ENCODE measurements at regions of chr6 and their contacts with region 1.

Region 1: GRCh38 chr6:75437421-75437891 is 56.1 kb downstream of the FILIP1 start:
- DNase-seq: no peak
- ATAC-seq: peak; percentile 87

Region 2: GRCh38 chr6:75368151-75368779 is 69.2 kb before region 1 on chr6:
- intact Hi-C with region 1: loop called (anchors 5 kb)
- DNase-seq: no peak
- ATAC-seq: peak; percentile 66

Region 3: GRCh38 chr6:75579951-75580350 is 142.5 kb after region 1 on chr6:
- intact Hi-C with region 1: no loop called
- DNase-seq: no peak
- ATAC-seq: no peak